Activated CD8-positive, alpha-beta T cell treated with anti-CD3 and anti-CD28 coated beads, Interleukin-2, amount 10 ng/mL, durations not matched to agents 7 days and 5 days (primary cell): ENCODE measurements at regions of chr3 and their contacts with region 1.

Region 1: DNA sequence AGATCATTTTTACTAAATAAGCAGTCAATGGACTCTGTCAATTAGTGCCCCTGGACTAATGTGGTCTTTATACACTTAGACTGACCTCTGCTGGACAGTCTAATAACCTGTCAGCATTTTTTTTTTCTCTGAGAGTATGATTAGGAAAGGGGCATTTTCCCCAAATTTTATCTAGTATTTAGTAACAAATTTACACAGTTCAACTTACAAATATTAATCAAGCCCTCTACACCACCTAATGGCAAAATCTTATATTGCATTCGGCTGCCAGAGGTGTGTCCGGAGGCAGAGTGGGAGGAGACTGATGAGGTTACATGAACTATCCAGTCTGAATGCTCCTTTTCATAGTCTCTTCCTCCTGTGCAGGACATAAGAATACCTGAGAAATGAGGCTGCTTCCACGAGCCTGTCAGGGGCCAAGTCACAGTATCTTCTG is 36.0 kb upstream of the COLQ start:
- DNase-seq: peak; percentile 87
- ATAC-seq: peak; percentile 95
- H3K4me3 Mint-ChIP-seq: no peak overlapping the region
- H3K27ac Mint-ChIP-seq: peak overlapping the region; percentile 69
- H3K4me1 Mint-ChIP-seq: peaks cover 30% of the 10 kb centered on the region
- H3K27me3 Mint-ChIP-seq: no peaks in the 10 kb centered on the region

Region 2: DNA sequence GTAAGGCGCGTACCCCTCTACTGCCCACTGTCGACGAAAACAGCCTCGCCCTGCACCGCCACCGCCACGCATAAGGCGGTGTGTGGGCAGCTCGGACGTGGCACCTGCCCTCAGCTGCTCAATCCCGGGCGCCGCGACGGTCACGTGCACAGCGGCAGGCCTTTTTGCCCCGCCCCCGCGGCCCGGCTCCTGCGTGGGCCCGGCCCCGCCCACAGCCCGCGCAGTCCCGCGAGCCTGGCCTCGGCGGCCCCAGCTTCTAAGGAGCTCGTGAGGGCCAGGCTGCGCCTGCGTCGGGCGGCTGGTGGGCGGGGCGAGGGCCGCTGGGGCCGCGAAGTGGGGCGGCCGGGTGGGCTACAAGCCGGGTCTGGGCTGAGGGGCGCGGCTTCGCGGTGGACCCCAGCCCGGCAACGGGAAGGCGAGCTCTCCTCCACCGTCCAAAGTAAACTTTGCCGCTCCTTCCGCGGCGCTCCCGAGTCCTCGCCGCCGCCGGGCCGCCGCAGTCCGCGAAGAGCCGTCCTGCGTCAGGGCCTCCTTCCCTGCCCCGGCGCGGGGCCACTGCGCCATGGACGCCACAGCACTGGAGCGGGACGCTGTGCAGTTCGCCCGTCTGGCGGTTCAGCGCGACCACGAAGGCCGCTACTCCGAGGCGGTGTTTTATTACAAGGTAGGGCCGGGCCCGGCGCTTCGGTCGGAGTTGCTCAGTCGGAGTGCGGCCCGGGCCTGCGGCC is 351.4 kb before region 1 on chr3 and contains the start of gene CAPN7:
- CTCF ChIA-PET with region 1: interaction called, 18 read pairs
- POLR2A ChIA-PET with region 1: no interaction called
- DNase-seq: peak; percentile 94
- ATAC-seq: peak; percentile 94
- H3K4me3 Mint-ChIP-seq: peak within 1 kb of the TSS; percentile 83
- H3K27ac Mint-ChIP-seq: peak within 1 kb of the TSS; percentile 86
- H3K4me1 Mint-ChIP-seq: peaks cover 29% of the 10 kb centered on the region
- H3K27me3 Mint-ChIP-seq: no peaks in the 10 kb centered on the region
- total RNA-seq, gene CAPN7: 28.3 to 29.5 TPM

Region 3: GRCh38 chr3:15405448-15406050 is 152.0 kb before region 1 on chr3:
- CTCF ChIA-PET with region 1: interaction called, 23 read pairs
- POLR2A ChIA-PET with region 1: no interaction called
- DNase-seq: peak; percentile 52
- ATAC-seq: peak; percentile 81
- H3K4me3 Mint-ChIP-seq: no peak overlapping the region
- H3K27ac Mint-ChIP-seq: no peak overlapping the region
- H3K4me1 Mint-ChIP-seq: peaks cover 12% of the 10 kb centered on the region
- H3K27me3 Mint-ChIP-seq: peaks cover 1% of the 10 kb centered on the region

Region 4: GRCh38 chr3:15427182-15427880 is 130.2 kb before region 1 on chr3 and contains the starts of genes EAF1 and METTL6:
- CTCF ChIA-PET with region 1: interaction called, 16 read pairs
- POLR2A ChIA-PET with region 1: interaction called, 3 read pairs
- DNase-seq: peak; percentile 89
- ATAC-seq: peak; percentile 93
- H3K4me3 Mint-ChIP-seq: peak within 1 kb of the TSS; percentile 97
- H3K27ac Mint-ChIP-seq: peak within 1 kb of the TSS; percentile 98
- H3K4me1 Mint-ChIP-seq: peaks cover 46% of the 10 kb centered on the region
- H3K27me3 Mint-ChIP-seq: no peaks in the 10 kb centered on the region
- total RNA-seq, gene EAF1: 31.3 to 31.5 TPM
- total RNA-seq, gene METTL6: 18.2 to 20.6 TPM

Region 5: GRCh38 chr3:15486979-15487378 is 70.5 kb before region 1 on chr3:
- CTCF ChIA-PET with region 1: no interaction called
- POLR2A ChIA-PET with region 1: no interaction called
- DNase-seq: no peak
- ATAC-seq: no peak
- H3K4me3 Mint-ChIP-seq: no peak overlapping the region
- H3K27ac Mint-ChIP-seq: no peak overlapping the region
- H3K4me1 Mint-ChIP-seq: peaks cover 6% of the 10 kb centered on the region
- H3K27me3 Mint-ChIP-seq: peaks cover 15% of the 10 kb centered on the region

Region 6: GRCh38 chr3:15527031-15527459 is 30.5 kb before region 1 on chr3:
- CTCF ChIA-PET with region 1: interaction called, 15 read pairs
- POLR2A ChIA-PET with region 1: no interaction called
- DNase-seq: no peak
- ATAC-seq: no peak
- H3K4me3 Mint-ChIP-seq: no peak overlapping the region
- H3K27ac Mint-ChIP-seq: no peak overlapping the region
- H3K4me1 Mint-ChIP-seq: peaks cover 42% of the 10 kb centered on the region
- H3K27me3 Mint-ChIP-seq: no peaks in the 10 kb centered on the region

Region 7: DNA sequence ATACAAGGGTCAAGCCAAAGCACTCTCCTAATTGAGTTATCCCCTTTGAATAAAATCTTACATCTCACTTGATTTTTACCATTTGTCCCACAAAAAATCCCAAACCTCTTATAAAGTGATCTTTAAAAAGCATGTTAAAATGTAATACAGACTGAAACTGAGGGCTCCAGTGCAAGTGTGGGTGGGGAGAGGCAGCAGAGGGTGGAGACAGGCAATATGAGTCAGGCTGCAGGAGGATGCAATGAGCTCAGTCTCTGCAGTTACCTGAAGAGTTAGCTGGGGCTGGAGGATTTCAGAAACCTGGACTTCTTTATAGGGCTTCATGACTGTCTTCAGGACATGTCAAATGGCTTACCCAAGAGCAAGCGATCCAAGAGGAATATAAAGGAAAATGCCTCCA is 21.8 kb before region 1 on chr3:
- CTCF ChIA-PET with region 1: interaction called, 22 read pairs
- POLR2A ChIA-PET with region 1: interaction called, 5 read pairs
- DNase-seq: peak; percentile 77
- ATAC-seq: peak; percentile 95
- H3K4me3 Mint-ChIP-seq: peak overlapping the region; percentile 61
- H3K27ac Mint-ChIP-seq: peak overlapping the region; percentile 94
- H3K4me1 Mint-ChIP-seq: peaks cover 74% of the 10 kb centered on the region
- H3K27me3 Mint-ChIP-seq: no peaks in the 10 kb centered on the region

Region 8: GRCh38 chr3:15542614-15543013 is 14.9 kb before region 1 on chr3:
- CTCF ChIA-PET with region 1: interaction called, 19 read pairs
- POLR2A ChIA-PET with region 1: no interaction called
- DNase-seq: no peak
- ATAC-seq: no peak
- H3K4me3 Mint-ChIP-seq: no peak overlapping the region
- H3K27ac Mint-ChIP-seq: no peak overlapping the region
- H3K4me1 Mint-ChIP-seq: peaks cover 55% of the 10 kb centered on the region
- H3K27me3 Mint-ChIP-seq: peaks cover 7% of the 10 kb centered on the region

Region 9: GRCh38 chr3:15578289-15578867 is 20.8 kb after region 1 on chr3:
- CTCF ChIA-PET with region 1: no interaction called
- POLR2A ChIA-PET with region 1: no interaction called
- DNase-seq: no peak
- ATAC-seq: no peak
- H3K4me3 Mint-ChIP-seq: no peak overlapping the region
- H3K27ac Mint-ChIP-seq: no peak overlapping the region
- H3K4me1 Mint-ChIP-seq: no peaks in the 10 kb centered on the region
- H3K27me3 Mint-ChIP-seq: no peaks in the 10 kb centered on the region